Dorsolateral prefrontal cortex (tissue), 120 donors: ENCODE measurements at regions of chr1 and their contacts with region 1.

Region 1: GRCh38 chr1:23867953-23868556 is at the start of gene FUCA1:
- DNase-seq: peak; percentile 90 to 96 (median 94)
- H3K4me3 ChIP-seq: peak within 1 kb of the TSS; percentile 71 to 100 (median 95)
- H3K27ac ChIP-seq: peak within 1 kb of the TSS in 57 of 59 donors; percentile 16 to 92 (median 79)
- H3K27me3 ChIP-seq: no peaks in the 10 kb centered on the region
- CTCF ChIP-seq: peak; percentile 81 to 99 (median 97)
- total RNA-seq, gene FUCA1: 4.2 to 14.8 (median 9.3) TPM

Region 2: GRCh38 chr1:23691499-23692307 is 176.4 kb before region 1 on chr1 and contains the start of gene RPL11:
- intact Hi-C with region 1: loop called (anchors 5 to 10 kb)
- DNase-seq: peak; percentile 90 to 98 (median 94)
- H3K4me3 ChIP-seq: peak within 1 kb of the TSS; percentile 62 to 98 (median 89)
- H3K27ac ChIP-seq: peak within 1 kb of the TSS; percentile 38 to 96 (median 85)
- H3K27me3 ChIP-seq: no peaks in the 10 kb centered on the region
- CTCF ChIP-seq: peak; percentile 70 to 96 (median 88)
- total RNA-seq, gene RPL11: 167 to 380 (median 287) TPM

Region 3: DNA sequence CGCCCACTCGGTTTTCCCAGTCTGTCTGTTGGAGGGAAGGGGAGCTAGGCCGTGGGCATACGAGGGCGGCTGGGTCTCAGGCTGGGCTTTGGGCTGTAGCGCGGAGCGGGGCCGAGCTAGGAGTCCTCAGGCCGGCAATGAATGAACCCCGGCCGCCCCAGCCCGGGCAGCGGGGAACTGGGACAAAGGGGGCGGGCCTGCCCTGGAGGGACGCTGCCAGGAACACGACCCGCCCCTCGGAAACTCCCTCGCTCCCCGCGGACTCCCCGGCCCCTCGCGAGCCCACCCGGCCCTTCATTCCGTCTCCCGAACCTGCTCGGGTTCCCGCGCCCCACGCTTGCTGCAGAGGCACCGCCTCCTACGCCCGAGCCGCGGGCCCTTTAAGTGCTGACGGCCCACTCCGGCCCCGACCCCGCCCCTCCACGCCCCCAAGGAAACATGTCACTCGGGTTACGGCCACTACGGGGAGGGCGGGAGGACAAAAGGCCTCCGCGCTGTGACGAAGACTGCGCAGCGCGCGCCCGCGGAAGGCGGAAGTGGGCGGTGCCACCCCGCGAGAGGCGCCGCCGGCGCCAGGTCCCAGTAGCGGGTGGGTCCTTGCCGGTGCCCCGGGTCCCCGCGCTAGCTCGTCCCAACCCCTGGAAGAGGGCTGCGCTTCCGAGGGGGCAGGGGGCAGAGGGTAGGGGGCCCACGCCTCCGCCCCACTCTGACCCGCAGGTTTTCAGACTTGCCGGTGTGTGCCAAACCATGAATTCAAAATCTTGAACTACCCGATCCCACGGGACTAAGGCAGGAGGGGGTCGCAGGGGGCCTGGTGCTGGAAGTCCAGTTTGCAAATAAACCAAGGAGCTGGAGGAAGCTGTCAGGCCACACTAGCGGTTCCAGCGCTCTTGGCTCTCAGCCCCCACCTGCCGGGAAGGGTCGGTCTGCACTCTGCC is 67.4 kb before region 1 on chr1 and contains the start of gene GALE:
- intact Hi-C with region 1: loop called (anchors 5 kb)
- DNase-seq: peak; percentile 95 to 97 (median 96)
- H3K4me3 ChIP-seq: peak within 1 kb of the TSS; percentile 64 to 99 (median 91)
- H3K27ac ChIP-seq: peak within 1 kb of the TSS; percentile 70 to 99 (median 96)
- H3K27me3 ChIP-seq: no peaks in the 10 kb centered on the region
- CTCF ChIP-seq: peak in 25 of 56 donors; percentile 7 to 63 (median 27)
- total RNA-seq, gene GALE: 13.2 to 40.0 (median 24.0) TPM

Region 4: DNA sequence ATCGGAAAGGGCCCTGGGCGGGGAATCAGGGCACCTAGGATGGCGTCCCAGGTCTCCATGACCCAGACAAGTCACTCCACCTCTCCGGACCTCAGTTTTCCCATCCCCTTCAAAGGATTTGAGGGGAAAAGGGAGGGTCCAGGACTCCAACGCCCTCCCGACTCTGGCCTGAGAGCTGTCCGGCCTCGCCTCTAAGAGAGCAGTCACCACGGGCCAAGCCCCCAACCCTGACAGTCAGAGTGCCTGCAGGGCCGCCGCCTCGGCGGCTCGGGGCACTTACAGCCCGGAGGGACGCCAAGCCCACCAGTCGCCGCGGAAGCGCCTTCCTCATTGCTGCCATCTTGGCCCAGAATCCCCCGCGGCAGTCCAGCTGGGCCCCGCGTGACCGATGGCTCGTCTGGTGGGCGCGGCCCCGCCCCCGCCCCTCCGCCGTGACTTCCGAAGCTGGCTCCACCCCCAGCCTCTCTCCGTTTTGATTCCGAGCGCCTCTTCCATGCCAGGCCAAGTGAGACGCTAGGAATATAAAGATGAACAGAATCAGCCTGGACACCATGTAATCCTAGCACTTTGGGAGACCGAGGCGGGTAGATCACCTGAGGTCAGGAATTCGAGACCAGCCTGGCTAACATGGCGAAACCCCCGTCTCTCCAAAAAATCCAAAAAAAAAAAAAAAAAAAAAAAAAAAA is 42.8 kb before region 1 on chr1 and contains the start of gene HMGCL:
- intact Hi-C with region 1: loop called (anchors 1 to 2 kb)
- DNase-seq: peak; percentile 86 to 93 (median 92)
- H3K4me3 ChIP-seq: peak within 1 kb of the TSS; percentile 66 to 100 (median 96)
- H3K27ac ChIP-seq: peak within 1 kb of the TSS; percentile 74 to 99 (median 96)
- H3K27me3 ChIP-seq: no peaks in the 10 kb centered on the region
- CTCF ChIP-seq: peak in 44 of 56 donors; percentile 0 to 56 (median 23)
- total RNA-seq, gene HMGCL: 13.4 to 38.9 (median 24.4) TPM

Region 5: DNA sequence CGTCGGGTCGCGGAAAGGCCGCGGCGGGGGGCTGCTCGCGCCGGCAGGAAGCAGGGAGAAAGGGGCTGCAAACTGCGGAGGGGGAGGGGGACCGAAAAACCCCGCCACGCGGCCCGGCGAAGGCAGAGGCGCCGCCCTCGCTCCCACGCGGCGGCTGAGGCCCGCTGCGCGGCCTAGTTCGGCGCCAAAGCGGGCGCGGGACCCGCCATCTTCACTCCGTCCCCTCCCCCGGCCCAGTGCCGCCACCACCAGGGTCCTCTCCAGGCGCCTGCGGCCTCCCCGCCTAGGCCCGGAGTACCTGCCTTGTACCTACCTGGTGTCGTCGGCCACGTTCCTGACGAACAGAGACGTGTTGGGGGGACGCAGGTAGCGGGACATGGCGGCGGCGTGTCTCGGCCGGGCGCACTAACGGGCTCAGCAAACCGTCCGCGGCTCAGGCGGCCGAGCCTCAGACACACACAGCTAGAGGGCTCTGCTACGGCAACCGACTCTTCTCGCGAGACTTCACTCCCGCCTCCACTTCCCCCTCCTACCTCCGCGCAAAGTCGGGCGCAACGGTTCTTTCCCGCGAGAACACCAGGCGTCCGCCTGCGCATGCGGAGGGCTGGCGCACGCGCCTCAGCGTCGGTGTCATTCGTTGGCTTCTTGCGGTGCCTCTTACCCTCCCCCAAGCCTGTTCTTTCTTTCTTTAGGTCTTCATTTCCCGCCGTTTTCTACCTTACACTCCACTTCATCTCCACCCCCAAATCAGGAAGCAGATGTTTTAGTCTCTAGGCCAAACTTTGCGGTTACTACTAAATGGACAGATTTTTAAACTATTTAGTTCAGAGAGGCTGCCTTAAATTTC is 112.0 kb after region 1 on chr1 and contains the start of gene SRSF10:
- intact Hi-C with region 1: loop called in 1 of 2 experiments (anchors 5 kb)
- DNase-seq: peak; percentile 95 to 98 (median 98)
- H3K4me3 ChIP-seq: peak within 1 kb of the TSS; percentile 66 to 98 (median 92)
- H3K27ac ChIP-seq: peak within 1 kb of the TSS; percentile 61 to 99 (median 95)
- H3K27me3 ChIP-seq: no peaks in the 10 kb centered on the region
- CTCF ChIP-seq: peak in 55 of 56 donors; percentile 40 to 88 (median 75)
- total RNA-seq, gene SRSF10: 59.4 to 96.0 (median 77.6) TPM

Region 6: DNA sequence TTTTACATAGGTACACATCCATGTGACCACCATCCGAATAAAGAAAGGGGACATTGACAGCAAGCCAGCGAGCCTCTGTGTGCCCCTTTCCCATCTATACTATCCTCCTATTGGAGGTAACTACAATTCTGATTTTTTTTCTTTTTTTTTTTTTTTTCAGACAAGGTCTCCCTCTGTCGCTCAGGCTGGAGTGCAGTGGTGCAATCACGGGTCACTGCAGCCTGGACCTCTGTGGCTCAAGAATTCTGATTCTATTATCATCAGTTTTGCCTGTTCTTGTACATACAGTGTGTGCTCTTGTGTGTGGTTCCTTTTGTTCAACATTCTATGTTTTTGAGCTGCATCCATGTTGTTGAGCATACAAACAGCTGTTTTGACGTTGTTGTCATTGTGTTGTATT is 168.0 kb after region 1 on chr1:
- intact Hi-C with region 1: no loop called
- DNase-seq: no peak
- H3K4me3 ChIP-seq: no peak overlapping the region
- H3K27ac ChIP-seq: no peak overlapping the region
- H3K27me3 ChIP-seq: no peaks in the 10 kb centered on the region
- CTCF ChIP-seq: no peak